SK-N-SH (cell line): ENCODE measurements at regions of chr22 and their contacts with region 1.

Region 1: DNA sequence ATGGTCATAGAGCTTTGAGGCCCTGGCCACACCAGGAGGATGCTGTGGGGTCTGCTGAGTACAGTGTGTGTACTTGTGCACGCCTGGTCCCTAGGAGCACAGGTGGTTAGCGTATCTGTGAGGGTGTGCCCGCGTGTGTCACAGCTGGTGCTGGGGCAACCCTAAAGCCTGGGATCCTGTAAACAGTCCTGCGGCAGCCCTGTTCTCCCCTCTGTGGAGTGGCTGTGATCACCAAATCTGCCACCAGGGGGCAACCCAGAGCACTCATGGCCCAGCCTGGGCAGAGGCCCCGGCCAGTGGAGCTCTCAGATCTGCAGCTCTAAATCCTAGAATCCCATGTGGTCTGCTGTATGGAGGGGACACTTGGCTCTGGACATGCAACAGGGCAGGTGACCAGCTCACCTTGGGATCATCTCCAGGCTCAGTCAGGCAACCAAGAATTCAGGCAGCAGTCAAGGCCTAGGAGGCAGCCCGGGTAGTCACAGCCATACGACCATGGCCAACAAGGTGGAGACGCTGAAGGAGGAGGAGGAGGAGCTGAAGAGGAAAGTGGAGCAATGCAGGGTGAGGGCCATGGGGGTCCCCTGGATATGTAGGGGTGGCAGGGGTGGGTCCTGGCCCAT is 3.9 kb downstream of the SH3BP1 start:
- DNase-seq: peak; percentile 91
- H3K4me3 ChIP-seq: peak overlapping the region in 1 of 2 experiments; percentile 42; a peak in 1 of 4 replicates
- H3K27ac ChIP-seq: no peak overlapping the region; a peak in 1 of 4 replicates
- H3K4me1 ChIP-seq: peaks cover 4 to 26% of the 10 kb centered on the region in 2 experiments; a peak in 2 of 4 replicates
- H3K27me3 ChIP-seq: no peaks in the 10 kb centered on the region
- CTCF ChIP-seq: peak; percentile 90
- EP300 ChIP-seq: no peak
- RAD21 ChIP-seq: peak; percentile 76

Region 2: DNA sequence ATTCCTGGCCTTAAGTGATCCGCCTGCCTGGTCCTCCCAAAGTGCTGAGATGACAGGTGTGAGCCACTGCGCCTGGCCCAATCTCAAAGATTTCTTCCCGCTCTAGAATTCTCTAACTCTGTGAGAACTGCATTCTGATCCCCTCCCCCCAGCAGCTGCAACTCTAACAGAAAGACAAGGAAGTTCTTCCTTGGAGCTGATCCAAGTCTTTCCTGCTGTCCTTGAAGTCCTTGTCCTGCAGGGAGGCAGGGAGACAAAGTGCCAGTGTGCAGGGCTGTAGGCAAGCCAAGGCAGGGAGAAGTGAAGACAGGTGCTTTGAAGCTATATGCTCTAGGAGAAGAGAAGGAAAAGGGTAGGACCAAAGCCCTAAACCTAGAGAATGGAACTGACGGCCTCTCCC is 44.2 kb before region 1 on chr22:
- CTCF ChIA-PET with region 1: no interaction called
- POLR2A ChIA-PET with region 1: no interaction called
- DNase-seq: no peak
- H3K4me3 ChIP-seq: no peak overlapping the region
- H3K27ac ChIP-seq: no peak overlapping the region
- H3K4me1 ChIP-seq: no peaks in the 10 kb centered on the region
- H3K27me3 ChIP-seq: no peaks in the 10 kb centered on the region; the same call in 1 of the 2 replicates
- CTCF ChIP-seq: no peak
- EP300 ChIP-seq: no peak
- RAD21 ChIP-seq: no peak

Region 3: GRCh38 chr22:37616201-37617083 is 26.9 kb before region 1 on chr22:
- CTCF ChIA-PET with region 1: interaction called, 898 read pairs
- POLR2A ChIA-PET with region 1: no interaction called
- DNase-seq: no peak
- H3K4me3 ChIP-seq: no peak overlapping the region
- H3K27ac ChIP-seq: no peak overlapping the region
- H3K4me1 ChIP-seq: peaks cover 0 to 2% of the 10 kb centered on the region in 2 experiments; a peak in 1 of 4 replicates
- H3K27me3 ChIP-seq: no peaks in the 10 kb centered on the region
- CTCF ChIP-seq: no peak
- EP300 ChIP-seq: no peak
- RAD21 ChIP-seq: no peak

Region 4: GRCh38 chr22:37658133-37659065 is 15.1 kb after region 1 on chr22 and contains the start of gene PDXP:
- CTCF ChIA-PET with region 1: interaction called, 898 read pairs
- POLR2A ChIA-PET with region 1: interaction called, 21 read pairs
- DNase-seq: peak; percentile 98
- H3K4me3 ChIP-seq: peak within 1 kb of the TSS; percentile 67 to 70
- H3K27ac ChIP-seq: peak within 1 kb of the TSS; percentile 73 to 93
- H3K4me1 ChIP-seq: peaks cover 19 to 37% of the 10 kb centered on the region in 2 experiments; a peak in 3 of 4 replicates
- H3K27me3 ChIP-seq: no peaks in the 10 kb centered on the region
- CTCF ChIP-seq: no peak
- EP300 ChIP-seq: no peak; a peak in 1 of 4 replicates
- RAD21 ChIP-seq: no peak
- polyA plus RNA-seq, gene PDXP: 22.5 and 24.5 TPM in 2 replicates

Region 5: GRCh38 chr22:37734964-37735451 is 91.7 kb after region 1 on chr22:
- CTCF ChIA-PET with region 1: interaction called, 45 read pairs
- POLR2A ChIA-PET with region 1: no interaction called
- DNase-seq: peak; percentile 91
- H3K4me3 ChIP-seq: no peak overlapping the region; a peak in 1 of 4 replicates
- H3K27ac ChIP-seq: peak overlapping the region in 1 of 2 experiments; percentile 8; a peak in 1 of 4 replicates
- H3K4me1 ChIP-seq: peaks cover 0 to 10% of the 10 kb centered on the region in 2 experiments; a peak in 1 of 4 replicates
- H3K27me3 ChIP-seq: no peaks in the 10 kb centered on the region
- CTCF ChIP-seq: peak; percentile 41
- EP300 ChIP-seq: no peak
- RAD21 ChIP-seq: peak; percentile 72

Region 6: DNA sequence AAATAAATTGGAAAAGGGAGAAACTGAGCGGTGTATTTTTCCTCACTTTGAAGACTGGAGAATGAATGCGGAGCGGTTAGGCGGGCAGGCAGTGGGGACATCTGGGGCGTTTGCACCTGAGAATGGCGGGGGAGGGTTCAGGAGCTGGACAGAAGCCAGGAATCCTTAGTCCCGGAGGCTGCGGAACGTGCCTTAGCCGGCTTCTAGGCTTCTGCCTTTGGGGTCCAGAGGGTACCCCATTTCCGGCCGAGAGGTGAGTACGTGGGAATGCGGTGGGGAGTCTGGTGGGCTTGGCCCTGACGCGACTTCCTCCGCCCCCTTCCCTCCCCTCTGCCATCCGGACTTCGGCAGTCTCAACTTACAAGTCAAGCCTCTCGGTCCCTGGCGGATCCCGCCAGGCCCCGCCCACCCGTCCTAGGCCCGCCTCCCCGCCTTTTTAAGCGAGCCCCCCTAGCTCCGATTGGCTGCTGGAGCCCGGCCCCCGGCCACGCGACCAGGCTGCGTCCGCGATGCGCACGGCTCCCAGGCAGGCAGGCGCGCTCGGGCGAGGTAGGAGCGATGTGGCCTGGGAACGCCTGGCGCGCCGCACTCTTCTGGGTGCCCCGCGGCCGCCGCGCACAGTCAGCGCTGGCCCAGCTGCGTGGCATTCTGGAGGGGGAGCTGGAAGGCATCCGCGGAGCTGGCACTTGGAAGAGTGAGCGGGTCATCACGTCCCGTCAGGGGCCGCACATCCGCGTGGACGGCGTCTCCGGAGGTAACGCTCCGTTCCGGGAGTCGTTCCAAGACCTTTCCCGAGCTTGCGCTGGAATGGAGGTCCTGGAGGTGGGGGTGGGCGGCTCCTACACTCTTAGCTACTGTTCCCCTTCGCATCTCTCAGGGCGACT is 164.3 kb after region 1 on chr22 and contains the start of gene GCAT:
- CTCF ChIA-PET with region 1: interaction called, 10 read pairs
- POLR2A ChIA-PET with region 1: no interaction called
- DNase-seq: peak; percentile 99
- H3K4me3 ChIP-seq: peak within 1 kb of the TSS; percentile 70
- H3K27ac ChIP-seq: peak within 1 kb of the TSS; percentile 61
- H3K4me1 ChIP-seq: peaks cover 0 to 34% of the 10 kb centered on the region in 2 experiments; a peak in 2 of 4 replicates
- H3K27me3 ChIP-seq: no peaks in the 10 kb centered on the region
- CTCF ChIP-seq: no peak
- EP300 ChIP-seq: no peak
- RAD21 ChIP-seq: no peak
- polyA plus RNA-seq, gene GCAT: 20.3 and 24.2 TPM in 2 replicates